ENCODE measurements at regions of chrX and their contacts with region 1.

Region 1: DNA sequence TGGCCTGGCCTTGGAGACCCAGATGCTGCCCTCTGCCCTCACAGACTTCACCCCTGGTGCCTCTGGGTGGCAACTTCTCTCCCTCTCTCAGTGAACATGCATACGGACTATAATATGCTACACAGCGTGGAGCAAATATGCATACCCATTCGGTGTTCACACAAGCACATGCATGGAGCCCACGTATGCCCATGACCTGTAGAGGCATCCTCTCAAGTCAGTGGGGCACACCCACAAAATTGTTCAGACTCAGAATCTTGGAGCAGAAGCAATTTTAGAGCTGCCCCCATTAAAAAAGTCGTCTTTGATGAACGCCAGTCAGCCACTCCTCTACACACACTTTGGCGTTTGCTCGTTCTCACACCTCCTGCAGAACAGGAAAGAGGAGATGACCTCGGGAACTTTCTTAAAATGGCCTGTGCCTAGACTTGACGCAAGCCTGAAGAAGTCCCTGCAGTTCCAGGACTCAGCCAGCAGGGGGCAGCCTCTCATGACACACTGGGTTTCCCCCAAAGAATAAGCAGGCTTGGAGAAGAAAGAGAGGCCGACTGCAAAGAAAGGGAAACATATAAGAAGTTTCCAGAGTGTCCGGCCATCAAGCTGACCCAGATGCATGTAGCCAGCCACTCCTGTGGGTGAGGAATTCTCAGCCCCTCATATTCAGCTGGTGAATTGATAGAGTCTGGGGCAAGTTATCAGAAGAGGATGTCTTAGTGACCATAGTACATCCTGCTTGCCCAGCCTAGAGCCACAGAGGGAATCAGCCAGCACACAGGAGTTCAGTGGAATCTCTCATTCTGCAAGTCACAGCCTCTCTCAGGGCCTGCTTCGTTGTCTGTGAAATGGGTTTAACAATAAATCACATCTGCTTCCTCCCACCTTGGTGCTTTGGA is 17.3 kb downstream of the APLN start:
- DNase-seq: no peak
- H3K4me3 ChIP-seq: no peak overlapping the region
- H3K27ac ChIP-seq: no peak overlapping the region
- H3K4me1 ChIP-seq: peaks cover 6% of the 10 kb centered on the region
- H3K27me3 ChIP-seq: no peaks in the 10 kb centered on the region
- CTCF ChIP-seq: peak; percentile 58 to 83 (median 77)
- POLR2A ChIP-seq: no peak

Region 2: DNA sequence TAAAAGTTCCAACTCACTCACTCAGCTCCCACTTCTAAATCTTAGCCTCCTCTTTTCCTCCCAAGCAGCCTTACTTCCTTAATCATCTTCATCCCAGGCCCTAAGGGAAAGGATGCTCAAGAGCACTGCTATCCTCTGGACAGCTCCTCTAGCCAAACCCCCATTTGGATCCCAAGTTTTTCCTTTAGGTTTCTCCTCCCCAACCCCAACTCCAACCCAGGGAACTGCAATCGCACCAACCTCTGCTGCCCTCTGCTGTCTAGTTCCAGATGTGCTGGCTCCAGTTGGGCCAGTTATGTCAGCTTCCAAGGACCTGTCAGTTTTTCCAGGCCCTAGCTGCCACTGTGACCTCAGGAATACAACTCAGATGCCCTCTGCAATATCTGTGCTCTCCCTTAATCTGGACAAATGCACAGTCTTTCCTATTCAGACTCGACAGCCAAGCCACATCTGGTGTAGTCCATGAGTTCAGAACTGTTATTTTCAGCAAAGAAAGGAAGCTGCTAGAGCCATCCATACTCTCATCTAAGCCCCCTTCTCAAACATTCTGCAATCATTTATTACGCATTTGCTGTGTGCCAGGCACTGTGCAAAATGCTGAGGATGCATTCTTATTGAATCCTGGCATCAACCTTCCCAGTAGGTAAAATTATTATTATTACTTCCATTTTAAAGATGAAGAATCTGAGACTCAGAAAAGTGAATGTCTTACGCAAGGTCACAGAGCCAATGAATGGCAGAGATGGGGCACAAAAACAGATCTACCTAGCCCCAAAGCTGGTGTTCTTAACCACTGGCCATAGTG is 89.0 kb after region 1 on chrX:
- intact Hi-C with region 1: loop called (anchors 10 kb)
- DNase-seq: no peak
- H3K4me3 ChIP-seq: no peak overlapping the region
- H3K27ac ChIP-seq: no peak overlapping the region
- H3K4me1 ChIP-seq: no peaks in the 10 kb centered on the region
- H3K27me3 ChIP-seq: no peaks in the 10 kb centered on the region
- CTCF ChIP-seq: peak; percentile 54 to 62 (median 58)
- POLR2A ChIP-seq: no peak

Region 3: DNA sequence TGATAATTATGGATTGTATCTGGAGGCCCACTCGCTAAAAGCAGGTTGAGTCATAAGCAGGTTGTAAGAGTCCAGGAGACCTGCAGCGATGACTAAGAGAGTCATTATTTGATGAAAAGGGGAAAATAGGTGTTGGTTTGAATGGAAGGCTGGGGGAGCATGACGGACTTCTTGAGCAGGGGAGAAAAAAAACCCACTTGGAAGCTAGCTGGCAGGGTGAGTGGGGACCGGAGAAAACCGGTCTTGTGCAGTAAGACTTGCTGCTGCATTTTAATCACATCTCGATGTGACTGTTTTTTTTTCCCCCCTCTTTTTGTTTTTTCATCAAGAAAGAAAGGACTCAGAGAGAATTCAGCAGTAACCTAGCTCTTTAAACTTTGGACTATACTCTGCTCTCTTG is 1561.6 kb after region 1 on chrX:
- intact Hi-C with region 1: no loop called
- DNase-seq: no peak
- H3K4me3 ChIP-seq: no peak overlapping the region
- H3K27ac ChIP-seq: no peak overlapping the region
- H3K4me1 ChIP-seq: no peaks in the 10 kb centered on the region
- H3K27me3 ChIP-seq: no peaks in the 10 kb centered on the region
- CTCF ChIP-seq: no peak
- POLR2A ChIP-seq: no peak

Measured in vagina (tissue), 2 donors.